ENCODE measurements at regions of chr15 and their contacts with region 1.

Region 1: DNA sequence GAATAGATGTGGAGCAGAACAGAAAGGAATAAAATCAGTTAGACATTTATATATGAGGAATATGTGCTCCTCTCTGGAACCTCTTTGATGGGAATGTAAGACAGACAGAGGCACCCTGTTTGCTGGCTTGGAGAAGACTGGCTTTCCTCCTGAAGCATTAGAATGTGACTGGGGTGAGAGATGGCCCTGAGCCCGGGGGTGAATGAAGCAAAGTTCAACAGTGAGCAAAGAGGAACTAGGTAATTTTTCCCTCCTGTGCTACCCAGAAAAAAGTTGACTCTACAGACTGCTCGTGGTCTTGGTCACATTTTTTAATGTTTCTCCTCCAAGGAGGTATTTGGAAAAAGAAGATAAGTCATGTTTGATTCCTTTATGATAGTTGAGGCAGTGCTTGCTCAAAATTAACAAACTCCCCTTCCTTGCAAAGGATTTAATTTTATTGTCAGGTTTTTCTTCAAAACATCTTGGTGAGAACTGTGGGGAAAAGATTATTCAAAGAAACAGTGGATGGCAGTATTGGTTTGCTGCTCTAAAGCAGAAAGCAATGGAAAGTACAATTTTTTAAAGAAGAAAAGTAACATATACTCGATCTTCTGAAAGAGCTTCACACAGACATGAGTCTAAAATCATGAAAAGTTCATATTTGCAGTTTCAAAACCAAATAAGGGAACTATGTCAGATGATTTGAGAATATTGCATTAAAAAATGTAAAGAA is 370.4 kb upstream of the CDIN1 start:
- DNase-seq: no peak
- ATAC-seq: no peak
- H3K4me3 ChIP-seq: no peak overlapping the region
- H3K27ac ChIP-seq: no peak overlapping the region
- H3K4me1 ChIP-seq: peaks cover 13% of the 10 kb centered on the region
- H3K27me3 ChIP-seq: no peaks in the 10 kb centered on the region
- CTCF ChIP-seq: peak; percentile 46; the same call in 1 of the 2 replicates

Region 2: DNA sequence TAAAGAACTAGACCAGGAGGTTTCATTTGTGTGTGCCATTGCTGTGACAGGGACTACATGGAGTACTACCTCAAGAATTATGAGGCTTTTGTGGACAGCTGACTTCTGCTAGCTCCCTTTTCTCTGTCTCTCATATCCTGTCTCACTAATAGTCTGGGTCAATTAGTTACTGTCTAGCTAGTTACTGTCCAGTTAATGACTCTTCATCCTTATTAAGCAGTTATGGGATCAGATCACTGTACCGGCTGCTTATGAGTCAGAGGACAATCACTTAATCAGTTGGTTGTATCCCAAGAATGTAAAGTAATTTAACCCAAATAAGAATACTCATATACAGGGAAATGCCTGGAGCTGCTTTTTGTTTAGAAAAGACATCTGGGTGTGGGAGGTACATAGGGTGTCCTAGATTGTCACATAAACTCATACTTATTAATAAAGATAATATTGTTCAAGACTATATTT is 528.4 kb after region 1 on chr15:
- CTCF ChIA-PET with region 1: no interaction called
- POLR2A ChIA-PET with region 1: no interaction called
- intact Hi-C with region 1: loop called (anchors 2 kb)
- DNase-seq: peak; percentile 81
- ATAC-seq: peak; percentile 88
- H3K4me3 ChIP-seq: no peak overlapping the region
- H3K27ac ChIP-seq: peak overlapping the region; percentile 44
- H3K4me1 ChIP-seq: peaks cover 26% of the 10 kb centered on the region
- H3K27me3 ChIP-seq: no peaks in the 10 kb centered on the region
- CTCF ChIP-seq: no peak

Measured in PC-3 (cell line).